HEK293T (cell line): ENCODE measurements at regions of chr10 and their contacts with region 1.

Region 1: GRCh38 chr10:67259319-67259929 is 333.6 kb downstream of the LRRTM3 start:
- DNase-seq: peak; percentile 18

Region 2: GRCh38 chr10:67088036-67088435 is 171.4 kb before region 1 on chr10:
- CTCF ChIA-PET with region 1: interaction called, 10 read pairs
- POLR2A ChIA-PET with region 1: no interaction called
- DNase-seq: no peak